Sciatic nerve (tissue), 2 donors: ENCODE measurements at regions of chr3 and their contacts with region 1.

Region 1: GRCh38 chr3:142553741-142554140 is 24.8 kb downstream of the ATR start:
- DNase-seq: no peak
- ATAC-seq: no peak

Region 2: DNA sequence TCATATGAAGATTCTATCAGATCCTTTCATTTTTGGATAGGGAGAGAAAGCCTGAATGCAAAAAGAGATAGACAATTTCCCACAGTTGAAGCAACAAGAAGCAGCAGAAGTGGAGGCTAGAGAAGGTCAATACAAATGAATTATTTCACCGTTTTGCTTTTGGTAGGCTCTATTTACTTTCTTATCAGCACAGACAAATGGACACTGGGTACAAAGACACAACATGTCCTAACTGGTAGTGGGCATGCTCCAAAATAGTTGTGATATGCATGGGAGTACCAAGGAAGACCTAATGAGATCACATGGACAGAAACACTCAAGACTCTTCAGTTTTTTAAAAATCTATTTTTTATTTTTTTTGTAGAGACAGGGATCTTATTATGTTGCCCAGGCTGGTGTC is 205.3 kb before region 1 on chr3:
- intact Hi-C with region 1: no loop called
- DNase-seq: no peak
- ATAC-seq: no peak

Region 3: DNA sequence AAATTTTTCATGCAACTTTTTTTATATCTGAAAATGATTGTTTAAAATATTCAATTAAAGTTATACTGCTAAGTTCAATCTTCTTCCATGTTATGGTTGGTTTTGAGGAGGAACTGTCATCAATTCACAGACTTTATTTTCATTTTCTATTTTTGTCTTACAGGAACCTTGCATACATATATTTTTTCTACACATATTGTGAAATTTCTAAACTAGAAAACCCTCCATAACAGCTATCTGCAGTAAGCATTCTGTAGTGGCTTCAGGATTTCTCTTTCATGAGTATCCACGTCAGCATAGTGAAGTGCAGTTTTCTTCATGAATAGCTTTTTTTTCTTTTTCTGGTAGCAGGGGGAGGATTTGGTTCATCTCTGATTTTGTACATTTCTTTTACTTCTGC is 23.4 kb before region 1 on chr3:
- intact Hi-C with region 1: loop called (anchors 1 kb)
- DNase-seq: no peak
- ATAC-seq: no peak

Region 4: GRCh38 chr3:142613491-142613890 is 59.8 kb after region 1 on chr3:
- intact Hi-C with region 1: no loop called
- DNase-seq: no peak
- ATAC-seq: no peak

Region 5: DNA sequence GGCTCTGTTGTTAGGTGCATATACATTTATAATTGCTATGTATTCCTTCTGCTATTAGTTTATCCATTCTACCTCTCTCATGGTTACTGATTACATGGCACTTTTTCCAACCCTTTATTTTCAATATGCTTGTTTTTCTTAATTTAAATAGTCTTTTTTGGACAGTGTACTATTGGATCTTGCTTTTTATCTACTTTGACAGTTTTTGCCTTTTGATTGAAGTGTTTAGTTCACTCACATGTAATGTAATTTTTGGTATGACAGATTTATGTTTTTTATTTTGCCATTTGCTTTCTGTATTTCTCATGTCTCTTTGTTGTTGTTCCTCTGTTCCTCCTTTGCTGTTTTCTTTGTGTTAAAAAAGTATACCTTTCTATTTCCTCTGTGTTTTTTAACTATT is 214.6 kb after region 1 on chr3:
- intact Hi-C with region 1: no loop called
- DNase-seq: no peak
- ATAC-seq: no peak

Region 6: DNA sequence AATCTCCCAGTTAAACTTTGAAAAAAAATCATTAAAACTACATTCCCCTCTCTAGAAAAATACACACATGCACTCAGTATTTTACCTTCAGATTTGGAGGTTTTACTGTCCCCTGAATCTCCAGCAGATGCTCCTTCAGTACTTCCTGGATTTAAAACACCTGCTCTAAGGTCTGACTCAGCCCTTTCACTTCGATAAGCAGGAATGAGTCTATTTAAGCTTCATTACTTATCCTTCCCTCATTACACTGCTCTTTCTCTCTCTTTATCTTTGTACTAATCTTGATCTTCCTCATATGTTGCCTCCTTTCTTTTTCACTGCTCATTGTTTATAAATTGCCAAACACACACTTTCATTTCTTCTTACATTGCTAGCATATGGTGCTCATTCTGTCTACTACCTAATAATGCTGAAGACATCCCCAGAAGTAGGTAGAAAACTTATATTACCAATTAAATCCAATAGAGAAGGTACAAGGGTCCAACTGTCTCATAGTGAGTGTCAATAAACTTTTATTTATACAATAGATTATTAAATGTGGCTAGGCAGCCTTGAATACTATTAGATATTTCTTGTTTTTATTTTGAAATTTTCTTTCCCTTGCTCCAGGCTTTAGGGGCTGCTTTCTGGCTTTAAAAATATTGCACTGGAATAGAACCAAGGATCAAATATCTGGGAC is 1861.9 kb after region 1 on chr3:
- intact Hi-C with region 1: no loop called
- DNase-seq: no peak
- ATAC-seq: no peak